ENCODE measurements at regions of chr6 and their contacts with region 1.

Region 1: GRCh38 chr6:33700391-33701050 is 11.0 kb downstream of the UQCC2 start:
- DNase-seq: peak; percentile 69 to 77 (median 71)
- H3K4me3 ChIP-seq: no peak overlapping the region
- H3K4me3 Mint-ChIP-seq: peak overlapping the region in 1 of 8 donors; percentile 53
- H3K27ac ChIP-seq: peak overlapping the region; percentile 12
- H3K27ac Mint-ChIP-seq: peak overlapping the region; percentile 35 to 93 (median 90)
- H3K4me1 ChIP-seq: peaks cover 32% of the 10 kb centered on the region
- H3K4me1 Mint-ChIP-seq: peaks cover 21 to 49% (median 33%) of the 10 kb centered on the region in 4 donors
- H3K27me3 ChIP-seq: no peaks in the 10 kb centered on the region
- H3K27me3 Mint-ChIP-seq: no peaks in the 10 kb centered on the region

Region 2: DNA sequence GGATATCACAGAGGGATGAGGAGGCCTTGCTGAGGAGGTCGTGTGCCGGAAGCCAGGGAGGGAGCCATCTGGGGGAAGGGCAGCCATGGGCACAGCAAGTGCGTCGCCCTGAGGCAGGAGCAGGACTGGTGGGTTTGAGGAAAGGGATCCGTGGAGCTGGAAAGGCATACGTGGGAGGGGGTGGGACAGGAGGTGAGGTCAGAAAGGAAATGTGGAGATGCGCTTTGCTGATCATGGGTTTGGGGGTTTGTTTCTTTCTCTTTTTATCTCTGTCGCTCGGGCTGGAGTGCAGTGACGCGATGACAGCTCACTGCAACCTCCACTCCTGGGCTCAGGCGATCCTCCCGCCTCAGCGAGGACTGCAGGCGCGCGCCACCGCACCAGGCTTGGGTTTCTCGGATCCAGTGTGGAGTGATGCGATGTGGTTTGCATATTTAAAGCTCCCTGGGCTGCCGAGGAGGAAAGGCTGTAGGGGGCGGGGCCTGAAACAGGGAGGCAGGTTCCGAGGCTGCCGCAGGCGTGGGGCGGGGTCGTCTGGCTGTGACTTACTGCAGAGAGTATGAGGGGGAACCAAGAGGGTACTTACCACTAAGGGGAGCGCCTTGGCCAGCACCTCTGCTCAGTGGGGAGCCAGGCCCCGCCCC is 108.0 kb before region 1 on chr6:
- CTCF ChIA-PET with region 1: interaction called, 77 read pairs
- POLR2A ChIA-PET with region 1: interaction called, 4 read pairs
- intact Hi-C with region 1: loop called (anchors 1 kb)
- DNase-seq: peak; percentile 41 to 73 (median 44)
- H3K4me3 ChIP-seq: peak overlapping the region; percentile 6 to 52
- H3K4me3 Mint-ChIP-seq: peak overlapping the region; percentile 67 to 91 (median 86)
- H3K27ac ChIP-seq: peak overlapping the region; percentile 17
- H3K27ac Mint-ChIP-seq: peak overlapping the region; percentile 75 to 96 (median 92)
- H3K4me1 ChIP-seq: peaks cover 14% of the 10 kb centered on the region
- H3K4me1 Mint-ChIP-seq: peaks cover 12 to 23% (median 17%) of the 10 kb centered on the region in 4 donors
- H3K27me3 ChIP-seq: no peaks in the 10 kb centered on the region
- H3K27me3 Mint-ChIP-seq: no peaks in the 10 kb centered on the region

Region 3: DNA sequence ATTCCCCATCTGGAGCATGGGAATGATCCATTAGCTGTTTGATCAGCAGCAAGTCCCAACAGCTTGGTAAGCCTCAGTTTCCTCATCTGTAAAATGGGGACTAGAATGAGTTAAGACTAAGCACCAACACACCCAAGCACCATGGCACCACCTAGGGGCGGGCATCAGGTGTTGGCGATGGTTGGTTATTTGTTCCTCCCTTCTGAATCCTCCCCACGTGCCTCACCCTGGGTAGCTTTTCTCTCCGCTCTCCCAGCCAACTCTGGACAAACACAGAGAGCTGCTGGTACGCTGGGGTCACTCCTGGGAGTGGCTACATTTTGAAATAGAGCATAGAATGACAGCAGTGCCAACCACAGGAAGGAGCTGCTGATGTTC is 92.7 kb before region 1 on chr6:
- CTCF ChIA-PET with region 1: interaction called, 15 read pairs
- POLR2A ChIA-PET with region 1: no interaction called
- intact Hi-C with region 1: no loop called
- DNase-seq: peak in 4 of 5 donors; percentile 27 to 40 (median 32)
- H3K4me3 ChIP-seq: no peak overlapping the region
- H3K4me3 Mint-ChIP-seq: no peak overlapping the region
- H3K27ac ChIP-seq: no peak overlapping the region
- H3K27ac Mint-ChIP-seq: no peak overlapping the region
- H3K4me1 ChIP-seq: no peaks in the 10 kb centered on the region
- H3K4me1 Mint-ChIP-seq: no peaks in the 10 kb centered on the region
- H3K27me3 ChIP-seq: no peaks in the 10 kb centered on the region
- H3K27me3 Mint-ChIP-seq: no peaks in the 10 kb centered on the region

Region 4: GRCh38 chr6:33668927-33669326 is 31.6 kb before region 1 on chr6:
- CTCF ChIA-PET with region 1: interaction called, 19 read pairs
- POLR2A ChIA-PET with region 1: interaction called, 7 read pairs
- intact Hi-C with region 1: loop called (anchors 2 kb)
- DNase-seq: peak; percentile 68 to 81 (median 79)
- H3K4me3 ChIP-seq: no peak overlapping the region
- H3K4me3 Mint-ChIP-seq: peak overlapping the region in 2 of 8 donors; percentile 26 to 36
- H3K27ac ChIP-seq: peak overlapping the region; percentile 51
- H3K27ac Mint-ChIP-seq: peak overlapping the region; percentile 80 to 96 (median 94)
- H3K4me1 ChIP-seq: peaks cover 14% of the 10 kb centered on the region
- H3K4me1 Mint-ChIP-seq: peaks cover 14 to 19% (median 17%) of the 10 kb centered on the region in 4 donors
- H3K27me3 ChIP-seq: no peaks in the 10 kb centered on the region
- H3K27me3 Mint-ChIP-seq: no peaks in the 10 kb centered on the region

Region 5: DNA sequence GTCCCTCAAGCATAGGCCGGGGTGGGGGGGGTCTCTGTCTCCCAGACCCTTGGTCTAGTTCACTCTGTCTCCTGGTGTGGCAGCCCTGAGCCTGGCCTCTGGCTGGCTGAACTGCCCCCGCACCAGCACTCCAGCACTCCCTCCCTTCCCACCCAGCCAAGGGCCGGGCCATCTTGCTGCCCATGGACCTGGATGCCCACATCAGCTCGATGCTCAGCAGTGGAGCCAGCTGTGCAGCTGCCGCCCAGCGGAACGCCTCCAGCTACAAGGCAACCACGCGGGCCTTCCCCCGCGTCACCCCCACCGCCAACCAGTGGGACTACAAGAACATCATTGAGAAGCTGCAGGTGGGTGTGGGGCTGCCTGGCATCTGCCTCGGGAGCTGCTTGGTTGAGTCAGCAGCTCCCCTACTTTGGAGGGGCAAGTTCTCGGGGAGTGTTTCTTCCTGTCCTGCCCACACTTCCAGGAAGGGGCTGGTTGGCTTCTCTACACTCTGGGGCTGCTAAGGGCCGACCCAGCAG is 17.4 kb before region 1 on chr6:
- CTCF ChIA-PET with region 1: interaction called, 14 read pairs
- POLR2A ChIA-PET with region 1: interaction called, 22 read pairs
- intact Hi-C with region 1: no loop called
- DNase-seq: peak in 3 of 5 donors; percentile 45 to 70 (median 51)
- H3K4me3 ChIP-seq: no peak overlapping the region
- H3K4me3 Mint-ChIP-seq: peak overlapping the region in 1 of 8 donors; percentile 40
- H3K27ac ChIP-seq: peak overlapping the region; percentile 24
- H3K27ac Mint-ChIP-seq: peak overlapping the region in 6 of 7 donors; percentile 60 to 91 (median 78)
- H3K4me1 ChIP-seq: peaks cover 14% of the 10 kb centered on the region
- H3K4me1 Mint-ChIP-seq: peaks cover 6 to 24% (median 13%) of the 10 kb centered on the region in 4 donors
- H3K27me3 ChIP-seq: no peaks in the 10 kb centered on the region
- H3K27me3 Mint-ChIP-seq: no peaks in the 10 kb centered on the region

Region 6: DNA sequence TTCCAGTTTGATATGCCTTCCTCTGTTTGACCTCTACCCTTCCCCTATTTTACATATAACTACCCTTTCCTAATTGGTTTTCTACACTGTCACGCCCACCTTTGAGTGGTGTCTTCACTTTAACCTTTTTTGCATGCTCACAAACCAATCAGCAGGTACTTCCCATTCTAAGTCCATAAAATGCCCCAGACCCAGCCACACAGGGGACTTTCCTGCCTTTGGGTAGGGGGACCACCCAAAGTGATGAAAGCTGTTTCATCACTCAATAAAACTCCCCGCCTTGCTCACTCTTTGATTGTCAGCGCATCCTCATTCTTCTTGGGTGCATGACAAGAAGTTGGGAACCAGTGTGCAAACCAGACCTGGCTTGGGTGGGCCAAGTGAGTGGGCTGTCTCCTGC is 1036.3 kb after region 1 on chr6:
- CTCF ChIA-PET with region 1: no interaction called
- POLR2A ChIA-PET with region 1: no interaction called
- intact Hi-C with region 1: no loop called
- DNase-seq: no peak
- H3K4me3 ChIP-seq: no peak overlapping the region
- H3K4me3 Mint-ChIP-seq: no peak overlapping the region
- H3K27ac ChIP-seq: no peak overlapping the region
- H3K27ac Mint-ChIP-seq: no peak overlapping the region
- H3K4me1 ChIP-seq: no peaks in the 10 kb centered on the region
- H3K4me1 Mint-ChIP-seq: peaks cover 0 to 3% (median 0%) of the 10 kb centered on the region in 4 donors
- H3K27me3 ChIP-seq: no peaks in the 10 kb centered on the region
- H3K27me3 Mint-ChIP-seq: no peaks in the 10 kb centered on the region

Measured in CD4-positive, alpha-beta memory T cell (primary cell).